Activated CD8-positive, alpha-beta T cell treated with anti-CD3 and anti-CD28 coated beads for 36 hours (primary cell): ENCODE measurements at regions of chr12 and their contacts with region 1.

Region 1: DNA sequence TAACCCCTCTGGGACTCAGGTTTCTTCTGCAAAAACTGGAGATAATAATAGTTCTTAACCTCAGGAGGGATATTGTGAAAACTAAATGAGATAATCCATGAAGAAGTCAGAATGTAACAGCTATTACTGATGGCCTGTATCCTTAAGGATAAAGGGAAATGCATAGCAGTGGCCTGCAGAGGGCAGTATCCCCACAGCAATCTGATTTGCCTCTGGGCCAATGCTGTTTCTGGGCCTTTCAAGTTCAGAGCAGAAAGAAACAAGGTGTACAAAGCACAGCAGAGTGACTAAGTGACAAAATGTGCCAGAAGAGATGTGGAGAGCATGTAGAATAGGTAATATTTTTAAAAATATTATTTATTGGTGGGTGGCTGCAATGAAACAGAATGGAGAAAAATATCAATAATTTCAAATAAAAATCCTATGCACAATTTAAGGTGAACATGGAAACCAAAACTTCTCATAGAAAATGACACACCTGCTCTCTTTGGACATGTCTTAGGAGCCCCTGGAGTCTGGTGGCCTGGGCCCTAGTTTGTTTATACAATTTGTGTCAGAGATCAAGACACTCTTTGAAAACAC is 90.3 kb downstream of the C12orf75 start:
- DNase-seq: peak; percentile 77
- ATAC-seq: peak; percentile 76
- H3K4me3 Mint-ChIP-seq: no peak overlapping the region
- H3K27ac Mint-ChIP-seq: no peak overlapping the region
- H3K4me1 Mint-ChIP-seq: peaks cover 11% of the 10 kb centered on the region
- H3K27me3 Mint-ChIP-seq: no peaks in the 10 kb centered on the region
- CTCF ChIP-seq: peak; percentile 89

Region 2: GRCh38 chr12:105409801-105410471 is 10.8 kb before region 1 on chr12:
- CTCF ChIA-PET with region 1: interaction called, 10 read pairs
- POLR2A ChIA-PET with region 1: no interaction called
- intact Hi-C with region 1: no loop called
- DNase-seq: no peak
- ATAC-seq: no peak
- H3K4me3 Mint-ChIP-seq: no peak overlapping the region
- H3K27ac Mint-ChIP-seq: no peak overlapping the region
- H3K4me1 Mint-ChIP-seq: peaks cover 15% of the 10 kb centered on the region
- H3K27me3 Mint-ChIP-seq: no peaks in the 10 kb centered on the region
- CTCF ChIP-seq: no peak